Activated B cell treated with CpG ODN at 0.5 μM for 24 hours (primary cell): ENCODE measurements at regions of chr17 and their contacts with region 1.

Region 1: DNA sequence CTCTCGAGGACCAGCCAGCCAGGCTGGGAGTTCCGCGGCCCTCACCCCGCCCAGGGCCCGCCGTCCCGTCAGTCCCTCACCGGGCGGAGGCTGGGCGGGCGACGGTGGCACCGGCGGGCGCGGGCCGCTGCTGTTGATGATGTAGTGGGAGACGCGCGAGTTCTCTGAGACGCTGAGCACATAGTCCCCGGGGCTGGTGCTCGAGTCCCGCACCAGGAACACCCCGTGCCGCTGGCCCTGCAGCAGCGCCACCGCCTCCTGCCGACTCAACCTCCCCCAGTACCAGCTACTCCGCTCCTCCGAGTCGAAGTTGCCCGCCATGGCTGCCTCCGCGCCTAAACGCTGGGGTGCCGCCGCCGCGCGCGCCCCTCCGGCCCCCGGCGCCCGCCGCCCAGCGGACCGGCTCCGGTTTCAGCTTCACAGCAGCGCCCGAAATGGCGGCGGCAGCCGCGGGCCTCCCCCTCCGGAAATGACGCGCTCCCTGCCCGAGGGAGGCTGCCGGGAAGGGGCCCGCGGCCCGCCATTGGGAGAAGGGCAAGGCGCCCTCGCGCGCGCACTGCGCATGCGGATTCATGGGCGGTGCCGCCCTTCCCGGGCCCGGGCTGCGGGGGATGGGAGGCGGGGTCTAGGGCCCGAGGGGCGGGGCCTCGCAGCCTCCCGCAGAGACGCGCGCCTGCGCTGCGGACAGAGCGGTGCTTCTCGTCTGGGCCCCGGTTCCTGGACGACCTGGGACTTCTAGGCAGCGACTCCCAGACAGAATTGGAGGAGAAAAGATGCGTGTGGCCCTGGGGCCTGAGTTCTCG is at the start of gene CRK:
- DNase-seq: peak; percentile 99
- ATAC-seq: peak; percentile 92
- H3K4me3 Mint-ChIP-seq: peak within 1 kb of the TSS; percentile 94
- H3K27ac Mint-ChIP-seq: peak within 1 kb of the TSS; percentile 87
- H3K4me1 Mint-ChIP-seq: peaks cover 53% of the 10 kb centered on the region
- H3K27me3 Mint-ChIP-seq: no peaks in the 10 kb centered on the region
- CTCF ChIP-seq: no peak
- total RNA-seq, gene CRK: 22.5 and 29.1 TPM in 2 replicates

Region 2: GRCh38 chr17:1399679-1400512 is 56.1 kb before region 1 on chr17 and contains the start of gene YWHAE:
- CTCF ChIA-PET with region 1: no interaction called
- POLR2A ChIA-PET with region 1: interaction called, 6 read pairs
- intact Hi-C with region 1: loop called (anchors 1 kb)
- DNase-seq: peak; percentile 94
- ATAC-seq: peak; percentile 85
- H3K4me3 Mint-ChIP-seq: peak within 1 kb of the TSS; percentile 98
- H3K27ac Mint-ChIP-seq: peak within 1 kb of the TSS; percentile 98
- H3K4me1 Mint-ChIP-seq: peaks cover 44% of the 10 kb centered on the region
- H3K27me3 Mint-ChIP-seq: no peaks in the 10 kb centered on the region
- CTCF ChIP-seq: no peak
- total RNA-seq, gene YWHAE: 253 and 263 TPM in 2 replicates

Region 3: GRCh38 chr17:1474402-1475189 is 18.6 kb after region 1 on chr17:
- CTCF ChIA-PET with region 1: no interaction called
- POLR2A ChIA-PET with region 1: interaction called, 8 read pairs
- intact Hi-C with region 1: loop called (anchors 1 kb)
- DNase-seq: peak; percentile 58
- ATAC-seq: peak; percentile 64
- H3K4me3 Mint-ChIP-seq: peak overlapping the region; percentile 70
- H3K27ac Mint-ChIP-seq: peak overlapping the region; percentile 79
- H3K4me1 Mint-ChIP-seq: peaks cover 56% of the 10 kb centered on the region
- H3K27me3 Mint-ChIP-seq: no peaks in the 10 kb centered on the region
- CTCF ChIP-seq: no peak

Region 4: GRCh38 chr17:1561400-1562175 is 105.6 kb after region 1 on chr17:
- CTCF ChIA-PET with region 1: no interaction called
- POLR2A ChIA-PET with region 1: interaction called, 3 read pairs
- intact Hi-C with region 1: loop called (anchors 1 kb)
- DNase-seq: peak; percentile 54
- ATAC-seq: peak; percentile 26
- H3K4me3 Mint-ChIP-seq: peak overlapping the region; percentile 86
- H3K27ac Mint-ChIP-seq: peak overlapping the region; percentile 71
- H3K4me1 Mint-ChIP-seq: peaks cover 52% of the 10 kb centered on the region
- H3K27me3 Mint-ChIP-seq: no peaks in the 10 kb centered on the region
- CTCF ChIP-seq: no peak